Activated T-helper 1 cell treated with anti-CD3 and anti-CD28 coated beads, Interleukin-12 subunit alpha, Interleukin-12 subunit beta, Interleukin-2, Interleukin-4 antibody, amounts not matched to agents 30 ng/mL and 10 ng/mL and 1 ng/mL, durations not matched to agents 14 hours and 24 hours and 36 hours (primary cell): ENCODE measurements at regions of chr11 and their contacts with region 1.

Region 1: DNA sequence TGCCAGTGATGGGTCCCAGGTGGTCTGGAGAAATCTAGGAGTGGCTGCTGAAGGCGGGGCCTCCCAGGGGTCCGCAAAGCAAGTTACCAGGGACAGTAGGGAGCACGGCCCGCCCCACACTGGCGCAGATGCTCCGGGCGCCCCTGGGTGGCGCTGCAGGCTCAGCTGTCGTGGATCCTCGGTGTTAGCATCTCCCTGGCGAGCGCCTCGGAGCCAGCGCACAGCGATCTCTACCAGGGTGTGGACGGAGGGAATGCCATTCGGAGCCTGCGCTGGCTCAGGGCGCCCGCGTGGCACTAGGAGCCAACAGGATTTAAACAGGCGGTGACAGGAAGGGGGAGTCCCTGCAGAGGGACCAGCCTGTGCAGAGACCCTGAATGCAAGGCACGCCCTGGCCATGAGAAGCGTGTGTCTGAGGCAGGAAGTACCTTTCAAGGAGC is 20.2 kb downstream of the FADS3 start:
- DNase-seq: peak; percentile 60
- H3K4me3 Mint-ChIP-seq: peak overlapping the region; percentile 49
- H3K27ac Mint-ChIP-seq: no peak overlapping the region
- H3K4me1 Mint-ChIP-seq: peaks cover 6% of the 10 kb centered on the region
- H3K27me3 Mint-ChIP-seq: no peaks in the 10 kb centered on the region

Region 2: GRCh38 chr11:61899146-61899841 is 28.1 kb after region 1 on chr11:
- intact Hi-C with region 1: loop called (anchors 1 kb)
- DNase-seq: peak; percentile 86
- H3K4me3 Mint-ChIP-seq: no peak overlapping the region
- H3K27ac Mint-ChIP-seq: no peak overlapping the region
- H3K4me1 Mint-ChIP-seq: peaks cover 5% of the 10 kb centered on the region
- H3K27me3 Mint-ChIP-seq: peaks cover 4% of the 10 kb centered on the region

Region 3: GRCh38 chr11:61947486-61948210 is 76.5 kb after region 1 on chr11:
- intact Hi-C with region 1: loop called (anchors 1 kb)
- DNase-seq: peak; percentile 46
- H3K4me3 Mint-ChIP-seq: no peak overlapping the region
- H3K27ac Mint-ChIP-seq: no peak overlapping the region
- H3K4me1 Mint-ChIP-seq: no peaks in the 10 kb centered on the region
- H3K27me3 Mint-ChIP-seq: peaks cover 7% of the 10 kb centered on the region

Region 4: GRCh38 chr11:61985885-61986345 is 114.7 kb after region 1 on chr11:
- intact Hi-C with region 1: no loop called
- DNase-seq: no peak
- H3K4me3 Mint-ChIP-seq: no peak overlapping the region
- H3K27ac Mint-ChIP-seq: no peak overlapping the region
- H3K4me1 Mint-ChIP-seq: peaks cover 4% of the 10 kb centered on the region
- H3K27me3 Mint-ChIP-seq: peaks cover 10% of the 10 kb centered on the region

Region 5: DNA sequence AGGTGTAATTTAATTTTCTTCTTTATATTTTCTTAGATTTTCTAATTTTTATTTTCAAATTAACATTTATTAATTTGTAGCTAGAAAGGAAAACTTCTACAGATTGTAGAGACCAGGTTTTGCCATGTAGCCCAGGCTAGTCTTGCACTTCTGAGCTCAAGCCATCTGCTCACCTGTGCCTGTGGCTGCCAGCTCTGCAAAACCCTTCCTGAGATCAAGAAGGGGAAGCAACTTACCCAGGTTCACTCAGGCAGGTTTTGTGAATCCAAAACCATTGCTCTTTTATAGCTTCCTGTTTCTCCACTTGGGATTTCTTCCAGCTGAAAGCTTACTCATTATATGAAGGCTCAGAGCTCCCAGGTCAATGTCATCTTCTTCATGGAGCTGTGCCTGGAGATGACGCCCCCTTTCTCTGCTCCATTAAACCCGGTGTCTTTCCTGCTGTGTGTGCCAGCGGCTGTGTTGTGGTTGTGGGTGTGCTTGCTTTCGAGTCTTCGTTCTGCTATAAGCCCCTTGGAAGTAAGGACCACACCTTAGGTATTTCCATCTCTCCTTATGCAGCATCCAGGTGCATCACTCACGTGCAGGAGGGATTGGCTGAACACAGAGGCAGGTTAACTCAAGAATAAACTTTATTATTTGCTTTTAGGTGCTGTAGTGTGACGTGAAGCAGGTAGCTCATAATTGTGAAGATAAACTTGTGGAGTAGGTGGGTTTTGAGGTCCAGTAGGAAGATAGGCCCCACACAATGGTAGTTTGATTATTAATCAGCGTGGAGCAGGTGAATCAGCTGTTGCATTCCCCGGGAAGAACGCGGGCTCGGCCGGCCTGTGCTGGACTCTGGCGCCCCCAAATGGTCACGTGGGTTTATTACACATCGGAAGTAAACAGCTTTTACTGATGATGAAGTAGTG is 210.5 kb after region 1 on chr11:
- intact Hi-C with region 1: loop called (anchors 1 kb)
- DNase-seq: peak; percentile 61
- H3K4me3 Mint-ChIP-seq: no peak overlapping the region
- H3K27ac Mint-ChIP-seq: no peak overlapping the region
- H3K4me1 Mint-ChIP-seq: peaks cover 7% of the 10 kb centered on the region
- H3K27me3 Mint-ChIP-seq: no peaks in the 10 kb centered on the region

Region 6: GRCh38 chr11:62108017-62108750 is 237.0 kb after region 1 on chr11:
- intact Hi-C with region 1: loop called (anchors 1 kb)
- DNase-seq: peak; percentile 12
- H3K4me3 Mint-ChIP-seq: no peak overlapping the region
- H3K27ac Mint-ChIP-seq: no peak overlapping the region
- H3K4me1 Mint-ChIP-seq: peaks cover 13% of the 10 kb centered on the region
- H3K27me3 Mint-ChIP-seq: peaks cover 4% of the 10 kb centered on the region

Region 7: GRCh38 chr11:62208785-62209144 is 337.6 kb after region 1 on chr11:
- intact Hi-C with region 1: loop called (anchors 2 kb)
- DNase-seq: no peak
- H3K4me3 Mint-ChIP-seq: no peak overlapping the region
- H3K27ac Mint-ChIP-seq: no peak overlapping the region
- H3K4me1 Mint-ChIP-seq: no peaks in the 10 kb centered on the region
- H3K27me3 Mint-ChIP-seq: peaks cover 6% of the 10 kb centered on the region

Region 8: DNA sequence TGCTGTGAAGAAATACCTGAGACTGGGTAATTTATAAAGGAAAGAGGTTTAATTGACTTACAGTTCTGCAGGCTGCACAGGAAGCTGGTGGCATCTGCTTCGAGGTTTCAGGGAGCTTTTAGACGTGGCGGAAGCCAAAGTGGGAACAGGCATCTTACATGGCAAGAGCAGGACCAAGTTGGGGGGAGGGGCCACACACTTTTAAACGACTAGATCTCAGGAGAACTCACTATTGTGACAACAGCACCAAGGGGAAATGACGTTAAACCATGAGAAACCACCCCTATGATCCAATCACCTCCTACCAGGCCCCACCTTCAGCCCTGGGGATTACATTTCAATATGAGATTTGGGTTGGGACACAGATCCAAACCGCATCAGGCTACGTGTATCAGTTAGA is 438.8 kb after region 1 on chr11:
- intact Hi-C with region 1: loop called (anchors 2 kb)
- DNase-seq: no peak
- H3K4me3 Mint-ChIP-seq: no peak overlapping the region
- H3K27ac Mint-ChIP-seq: no peak overlapping the region
- H3K4me1 Mint-ChIP-seq: peaks cover 5% of the 10 kb centered on the region
- H3K27me3 Mint-ChIP-seq: peaks cover 32% of the 10 kb centered on the region